ENCODE measurements at regions of chr12 and their contacts with region 1.

Region 1: DNA sequence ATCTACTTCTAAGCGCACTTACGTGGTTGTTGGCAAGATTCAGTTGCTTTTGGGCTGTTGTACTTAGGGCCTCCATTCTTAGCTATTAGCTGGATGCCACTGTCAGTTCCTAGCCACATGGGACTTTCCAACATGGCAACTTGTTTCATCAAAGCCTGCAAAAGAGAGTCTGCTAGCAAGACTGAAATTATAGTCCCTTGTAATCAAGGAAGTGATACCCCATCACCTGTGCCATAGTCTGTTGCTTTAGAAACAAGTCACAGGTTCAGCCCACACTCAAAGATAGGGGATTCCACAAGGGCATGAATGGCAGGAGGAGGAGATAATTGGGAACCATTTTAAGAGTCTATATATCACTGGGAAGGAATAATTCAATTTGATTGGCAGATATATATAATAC is 27.1 kb upstream of the SLC17A8 start:
- DNase-seq: no peak
- ATAC-seq: no peak
- H3K4me3 ChIP-seq: no peak overlapping the region
- H3K27ac ChIP-seq: no peak overlapping the region
- H3K4me1 ChIP-seq: no peaks in the 10 kb centered on the region
- H3K27me3 ChIP-seq: no peaks in the 10 kb centered on the region

Region 2: DNA sequence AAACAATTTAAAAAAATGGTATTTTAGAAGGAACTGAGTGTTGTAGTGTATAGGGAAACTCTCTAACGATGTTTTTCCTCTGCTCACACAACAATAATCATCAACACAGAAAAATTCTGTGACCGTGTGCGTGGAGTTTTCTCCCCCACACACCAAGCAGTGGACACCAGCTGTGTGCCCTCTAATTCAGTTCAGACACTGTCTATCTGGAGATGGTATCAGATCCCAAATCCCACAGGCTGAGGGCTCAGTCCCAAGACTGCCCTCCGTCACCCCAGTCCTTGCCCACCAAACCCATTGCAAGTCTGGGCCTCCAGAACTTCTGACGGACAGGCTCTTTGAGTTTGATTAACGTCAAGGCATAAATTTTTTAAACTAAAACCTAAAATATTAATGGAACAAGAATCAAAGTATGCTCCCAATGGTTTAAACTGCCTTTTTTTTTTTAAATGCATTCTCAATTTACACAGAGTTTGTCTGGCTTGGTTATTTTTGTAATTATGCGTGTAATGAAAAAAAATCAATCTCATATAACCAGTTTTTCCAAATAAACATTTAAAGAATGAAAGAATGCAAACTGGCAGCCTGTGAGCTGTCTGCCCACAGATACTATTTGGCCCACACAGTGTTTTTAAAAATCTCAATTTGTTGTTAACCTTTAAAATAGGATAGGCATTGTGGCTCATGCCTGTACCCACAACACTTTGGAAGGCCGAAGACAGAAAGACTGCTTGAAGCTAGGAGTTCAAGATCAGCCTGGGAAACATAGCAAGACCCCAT is 206.3 kb before region 1 on chr12:
- intact Hi-C with region 1: no loop called
- DNase-seq: no peak
- ATAC-seq: no peak
- H3K4me3 ChIP-seq: no peak overlapping the region
- H3K27ac ChIP-seq: no peak overlapping the region
- H3K4me1 ChIP-seq: no peaks in the 10 kb centered on the region
- H3K27me3 ChIP-seq: no peaks in the 10 kb centered on the region

Region 3: GRCh38 chr12:100279607-100280244 is 50.1 kb before region 1 on chr12:
- intact Hi-C with region 1: loop called in 1 of 2 experiments (anchors 10 kb)
- DNase-seq: no peak
- ATAC-seq: no peak
- H3K4me3 ChIP-seq: no peak overlapping the region
- H3K27ac ChIP-seq: no peak overlapping the region
- H3K4me1 ChIP-seq: peaks cover 0 to 2% of the 10 kb centered on the region in 2 donors
- H3K27me3 ChIP-seq: no peaks in the 10 kb centered on the region

Measured in aorta (tissue), 5 donors.